ENCODE measurements at regions of chr9 and their contacts with region 1.

Region 1: GRCh38 chr9:2676466-2676865 is 40.8 kb upstream of the KCNV2 start:
- DNase-seq: no peak
- ATAC-seq: no peak
- H3K4me3 ChIP-seq: no peak overlapping the region
- H3K27ac ChIP-seq: no peak overlapping the region
- H3K4me1 ChIP-seq: no peaks in the 10 kb centered on the region
- H3K27me3 ChIP-seq: no peaks in the 10 kb centered on the region

Region 2: GRCh38 chr9:2459756-2460155 is 216.7 kb before region 1 on chr9:
- intact Hi-C with region 1: loop called in 1 of 4 experiments (anchors 10 kb)
- DNase-seq: peak in 2 of 3 donors; percentile 53 to 61
- ATAC-seq: no peak
- H3K4me3 ChIP-seq: no peak overlapping the region
- H3K27ac ChIP-seq: no peak overlapping the region
- H3K4me1 ChIP-seq: peaks cover 2% of the 10 kb centered on the region
- H3K27me3 ChIP-seq: no peaks in the 10 kb centered on the region

Measured in right cardiac atrium (tissue), 5 donors.